ENCODE measurements at regions of chr12 and their contacts with region 1.

Region 1: GRCh38 chr12:76299536-76300296 is 48.5 kb downstream of the BBS10 start:
- DNase-seq: no peak
- ATAC-seq: no peak
- H3K4me3 ChIP-seq: no peak overlapping the region
- H3K27ac ChIP-seq: no peak overlapping the region
- H3K4me1 ChIP-seq: peaks cover 3% of the 10 kb centered on the region
- H3K27me3 ChIP-seq: no peaks in the 10 kb centered on the region
- CTCF ChIP-seq: no peak
- POLR2A ChIP-seq: no peak
- RAD21 ChIP-seq: no peak

Region 2: DNA sequence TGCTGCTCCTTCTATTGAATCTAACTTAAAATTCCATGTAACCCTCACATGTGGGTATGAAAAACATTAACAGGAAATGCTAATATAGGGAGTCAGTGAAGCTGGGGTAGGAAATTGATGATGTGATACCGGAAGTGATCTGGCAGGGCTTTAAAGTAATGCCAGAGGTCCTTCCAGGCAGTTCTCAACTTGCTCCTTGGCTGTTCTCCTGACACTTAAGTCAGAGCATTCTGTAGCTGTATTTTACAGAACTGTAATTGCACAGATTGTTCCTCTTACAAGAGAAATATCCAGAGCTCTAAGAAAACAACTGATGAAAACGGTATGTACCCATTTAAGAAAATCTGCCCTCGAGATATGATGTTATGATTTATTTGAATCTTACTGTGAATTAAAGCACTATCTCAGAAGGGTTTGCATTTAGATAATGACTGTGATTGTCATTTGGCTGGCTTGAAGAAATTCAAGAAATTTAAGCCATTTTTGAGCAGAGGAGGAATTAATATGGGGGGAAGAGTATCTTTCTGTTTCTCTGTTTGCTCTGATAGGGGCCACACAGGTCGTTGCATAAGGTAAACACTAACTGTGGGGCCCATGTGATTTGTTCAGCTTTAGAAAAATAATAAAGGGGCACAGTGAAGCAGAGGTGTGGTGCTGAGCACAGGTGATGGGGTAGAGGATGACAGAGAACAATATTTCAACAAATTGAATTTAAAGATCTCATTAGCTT is 39.9 kb before region 1 on chr12:
- CTCF ChIA-PET with region 1: no interaction called
- POLR2A ChIA-PET with region 1: no interaction called
- dilution Hi-C with region 1: no loop called
- in situ Hi-C with region 1: no loop called
- intact Hi-C with region 1: no loop called
- DNase-seq: peak; percentile 94
- ATAC-seq: peak; percentile 73
- H3K4me3 ChIP-seq: no peak overlapping the region
- H3K27ac ChIP-seq: peak overlapping the region; percentile 44; the same call in 1 of the 2 replicates
- H3K4me1 ChIP-seq: peaks cover 12% of the 10 kb centered on the region
- H3K27me3 ChIP-seq: no peaks in the 10 kb centered on the region
- CTCF ChIP-seq: no peak
- POLR2A ChIP-seq: no peak
- RAD21 ChIP-seq: peak; percentile 25

Region 3: DNA sequence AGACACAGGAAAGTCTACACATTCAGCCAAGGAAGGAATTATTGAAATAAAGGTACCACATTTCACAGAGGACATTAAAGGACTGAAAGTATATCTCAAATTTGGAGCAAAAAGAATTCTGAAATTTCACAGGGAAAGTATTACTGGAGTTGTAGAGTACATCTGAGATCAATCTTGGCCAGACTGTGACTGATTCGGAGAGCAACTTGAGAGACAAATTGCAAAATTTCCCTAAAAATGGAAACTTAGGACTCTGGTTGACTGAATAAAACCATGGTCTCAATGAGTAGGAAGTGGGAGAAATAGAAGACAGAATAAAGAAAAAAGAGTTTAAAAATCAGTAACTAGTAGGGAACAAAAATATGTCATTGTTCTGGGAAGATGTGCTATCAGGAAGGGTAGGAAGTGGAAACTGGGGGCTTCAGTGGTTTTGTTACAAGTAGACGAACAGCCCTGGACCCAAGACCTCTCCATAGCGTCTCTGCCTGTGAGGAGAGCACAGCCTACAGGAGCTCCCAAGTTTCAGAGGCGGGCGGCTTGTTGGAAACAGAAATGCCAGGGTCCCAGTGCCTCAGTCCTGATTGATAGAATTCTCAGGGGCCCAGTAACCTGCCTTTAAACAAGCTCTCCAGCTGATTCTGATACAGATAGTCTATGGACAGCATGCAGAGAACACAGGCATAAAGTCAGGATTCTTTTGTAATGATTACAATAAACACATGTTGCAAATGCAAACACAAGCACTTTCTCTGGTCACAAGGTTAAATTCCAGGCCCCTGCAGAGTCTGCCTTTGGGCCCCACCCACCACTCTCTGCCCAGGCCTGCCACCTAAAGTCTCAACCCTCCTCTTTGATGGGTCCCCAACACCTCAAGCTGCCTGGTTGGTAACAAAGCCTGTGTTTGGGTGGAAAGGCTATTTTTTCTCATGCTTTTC is 14.6 kb before region 1 on chr12:
- CTCF ChIA-PET with region 1: no interaction called
- POLR2A ChIA-PET with region 1: no interaction called
- dilution Hi-C with region 1: no loop called
- in situ Hi-C with region 1: no loop called
- intact Hi-C with region 1: loop called (anchors 1 kb)
- DNase-seq: peak; percentile 73
- ATAC-seq: peak; percentile 94
- H3K4me3 ChIP-seq: no peak overlapping the region
- H3K27ac ChIP-seq: peak overlapping the region; percentile 84; the same call in 1 of the 2 replicates
- H3K4me1 ChIP-seq: peaks cover 12% of the 10 kb centered on the region
- H3K27me3 ChIP-seq: no peaks in the 10 kb centered on the region
- CTCF ChIP-seq: no peak
- POLR2A ChIP-seq: no peak
- RAD21 ChIP-seq: no peak